Psoas muscle (tissue), 8 donors: ENCODE measurements at regions of chr2 and their contacts with region 1.

Region 1: GRCh38 chr2:232327105-232328041 is 51.2 kb upstream of the ALPP start:
- DNase-seq: peak; percentile 77 to 85
- ATAC-seq: peak; percentile 55 to 77 (median 75)
- H3K4me3 ChIP-seq: no peak overlapping the region
- H3K27ac ChIP-seq: no peak overlapping the region
- H3K4me1 ChIP-seq: no peaks in the 10 kb centered on the region
- H3K27me3 ChIP-seq: no peaks in the 10 kb centered on the region
- CTCF ChIP-seq: peak; percentile 73

Region 2: DNA sequence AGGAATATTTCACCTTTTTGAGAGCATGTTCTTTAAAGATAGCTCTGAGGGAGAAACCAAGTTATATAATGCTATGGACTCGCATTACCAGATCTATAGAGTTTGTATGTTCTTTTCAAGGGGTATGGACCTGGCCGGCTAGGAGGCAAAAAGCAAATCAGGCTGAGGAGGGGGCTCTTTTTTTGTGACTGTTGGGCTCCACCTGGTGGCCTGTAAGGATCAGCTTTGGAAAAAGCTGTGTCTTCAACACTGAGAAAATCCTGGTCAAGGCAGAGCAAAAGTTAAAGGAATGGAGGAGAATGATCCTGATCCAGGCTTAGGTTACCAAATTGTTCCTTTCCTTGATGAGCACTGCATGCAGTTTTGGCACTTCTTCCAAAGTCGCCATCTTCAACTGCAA is 185.3 kb before region 1 on chr2:
- intact Hi-C with region 1: loop called (anchors 5 kb)
- DNase-seq: no peak
- ATAC-seq: peak; percentile 52 to 75 (median 54)
- H3K4me3 ChIP-seq: no peak overlapping the region
- H3K27ac ChIP-seq: no peak overlapping the region
- H3K4me1 ChIP-seq: peaks cover 5% of the 10 kb centered on the region
- H3K27me3 ChIP-seq: no peaks in the 10 kb centered on the region
- CTCF ChIP-seq: peak; percentile 67

Region 3: GRCh38 chr2:232300894-232301387 is 26.4 kb before region 1 on chr2:
- intact Hi-C with region 1: no loop called
- DNase-seq: no peak
- ATAC-seq: no peak
- H3K4me3 ChIP-seq: no peak overlapping the region
- H3K27ac ChIP-seq: no peak overlapping the region
- H3K4me1 ChIP-seq: no peaks in the 10 kb centered on the region
- H3K27me3 ChIP-seq: no peaks in the 10 kb centered on the region
- CTCF ChIP-seq: no peak